Activated CD4-positive, alpha-beta memory T cell treated with anti-CD3 and anti-CD28 coated beads for 36 hours (primary cell): ENCODE measurements at regions of chr3 and their contacts with region 1.

Region 1: GRCh38 chr3:122564155-122564912 is at the starts of genes DTX3L and PARP9:
- DNase-seq: peak; percentile 88
- H3K4me3 Mint-ChIP-seq: peak within 1 kb of the TSS; percentile 92
- H3K27ac Mint-ChIP-seq: peak within 1 kb of the TSS; percentile 97
- H3K4me1 Mint-ChIP-seq: peaks cover 67% of the 10 kb centered on the region
- H3K27me3 Mint-ChIP-seq: no peaks in the 10 kb centered on the region
- total RNA-seq, gene DTX3L: 39.6 to 40.8 TPM
- total RNA-seq, gene PARP9: 38.1 to 38.4 TPM

Region 2: GRCh38 chr3:122392868-122393844 is 171.2 kb before region 1 on chr3:
- CTCF ChIA-PET with region 1: interaction called, 10 read pairs
- POLR2A ChIA-PET with region 1: no interaction called
- intact Hi-C with region 1: no loop called
- DNase-seq: peak; percentile 20
- H3K4me3 Mint-ChIP-seq: no peak overlapping the region
- H3K27ac Mint-ChIP-seq: no peak overlapping the region
- H3K4me1 Mint-ChIP-seq: peaks cover 32% of the 10 kb centered on the region
- H3K27me3 Mint-ChIP-seq: no peaks in the 10 kb centered on the region

Region 3: GRCh38 chr3:122481390-122481789 is 82.9 kb before region 1 on chr3:
- CTCF ChIA-PET with region 1: no interaction called
- POLR2A ChIA-PET with region 1: no interaction called
- intact Hi-C with region 1: no loop called
- DNase-seq: no peak
- H3K4me3 Mint-ChIP-seq: no peak overlapping the region
- H3K27ac Mint-ChIP-seq: no peak overlapping the region
- H3K4me1 Mint-ChIP-seq: peaks cover 44% of the 10 kb centered on the region
- H3K27me3 Mint-ChIP-seq: no peaks in the 10 kb centered on the region

Region 4: DNA sequence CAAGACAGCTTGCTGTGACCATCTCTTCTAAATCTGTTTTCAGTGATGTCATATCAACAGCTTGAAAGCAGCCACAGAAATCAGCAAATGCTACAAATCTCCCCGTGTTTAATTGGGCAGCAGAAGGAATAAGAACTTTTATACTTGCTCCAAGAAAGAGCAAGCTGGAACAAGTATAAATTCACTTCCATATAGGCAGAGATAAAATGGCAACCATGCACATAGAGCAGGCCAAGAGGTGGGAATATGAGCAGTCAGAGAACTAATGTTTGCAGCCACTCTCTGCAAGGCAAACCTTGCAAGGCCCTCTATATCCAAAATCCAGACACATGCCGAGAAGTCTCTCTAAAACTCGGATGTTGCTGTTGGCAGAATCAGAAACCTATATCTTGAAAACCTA is 16.3 kb before region 1 on chr3:
- CTCF ChIA-PET with region 1: interaction called, 10 read pairs
- POLR2A ChIA-PET with region 1: no interaction called
- intact Hi-C with region 1: no loop called
- DNase-seq: no peak
- H3K4me3 Mint-ChIP-seq: no peak overlapping the region
- H3K27ac Mint-ChIP-seq: no peak overlapping the region
- H3K4me1 Mint-ChIP-seq: no peaks in the 10 kb centered on the region
- H3K27me3 Mint-ChIP-seq: no peaks in the 10 kb centered on the region

Region 5: GRCh38 chr3:122609798-122610559 is 45.6 kb after region 1 on chr3:
- CTCF ChIA-PET with region 1: interaction called, 3 read pairs
- POLR2A ChIA-PET with region 1: interaction called, 3 read pairs
- intact Hi-C with region 1: loop called (anchors 1 kb)
- DNase-seq: peak; percentile 37
- H3K4me3 Mint-ChIP-seq: peak overlapping the region; percentile 17
- H3K27ac Mint-ChIP-seq: peak overlapping the region; percentile 87
- H3K4me1 Mint-ChIP-seq: peaks cover 21% of the 10 kb centered on the region
- H3K27me3 Mint-ChIP-seq: no peaks in the 10 kb centered on the region